Naive thymus-derived CD4-positive, alpha-beta T cell (primary cell): ENCODE measurements at regions of chr15 and their contacts with region 1.

Region 1: DNA sequence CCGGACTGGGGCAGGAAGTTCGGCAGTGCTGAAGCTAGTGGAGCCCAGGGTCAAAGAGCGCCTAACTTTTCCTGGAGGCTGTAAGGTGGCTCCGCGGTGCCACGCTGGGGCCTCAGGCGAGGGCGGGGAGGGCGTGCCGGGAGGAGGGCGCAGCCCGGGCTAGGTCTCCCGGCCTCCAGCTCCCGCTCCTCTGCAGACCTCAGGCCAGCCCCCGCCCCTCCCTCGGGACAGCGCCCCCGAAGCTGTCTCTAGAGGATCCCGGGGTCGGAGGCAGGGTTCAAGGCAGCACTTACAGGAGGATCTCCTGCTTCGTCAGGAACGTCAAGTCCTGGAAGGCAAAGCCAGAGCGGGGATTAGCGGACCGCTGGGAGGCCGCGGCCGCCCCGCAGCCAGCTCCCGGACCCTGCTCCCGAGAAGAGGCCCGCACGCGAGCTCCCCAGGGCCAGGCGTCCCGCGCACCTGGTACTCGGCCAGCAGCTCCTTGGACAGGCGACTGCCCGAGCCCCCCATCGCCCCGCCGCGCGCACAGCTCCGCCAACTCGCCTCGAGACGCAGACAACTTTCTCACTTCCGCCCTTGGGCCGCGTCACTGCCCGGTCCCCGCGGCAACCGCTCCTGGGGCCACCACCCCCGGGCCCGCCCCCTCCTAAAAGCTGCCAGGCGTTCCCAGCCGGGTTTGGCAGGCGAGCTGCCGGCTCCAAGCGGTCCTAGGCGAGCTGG is at the start of gene CIB1:
- DNase-seq: peak in 7 of 9 donors; percentile 91 to 97 (median 95)
- ATAC-seq: peak; percentile 89
- H3K4me3 ChIP-seq: peak within 1 kb of the TSS; percentile 92
- H3K4me3 Mint-ChIP-seq: peak within 1 kb of the TSS; percentile 87 to 95 (median 92)
- H3K27ac ChIP-seq: peak within 1 kb of the TSS; percentile 99
- H3K27ac Mint-ChIP-seq: peak within 1 kb of the TSS; percentile 96 to 100 (median 98)
- H3K4me1 ChIP-seq: peaks cover 39 to 43% of the 10 kb centered on the region in 2 donors
- H3K4me1 Mint-ChIP-seq: peaks cover 40 to 67% (median 57%) of the 10 kb centered on the region in 7 donors
- H3K27me3 ChIP-seq: no peaks in the 10 kb centered on the region
- H3K27me3 Mint-ChIP-seq: no peaks in the 10 kb centered on the region
- total RNA-seq, gene CIB1: 76.8 to 149 (median 127) TPM

Region 2: DNA sequence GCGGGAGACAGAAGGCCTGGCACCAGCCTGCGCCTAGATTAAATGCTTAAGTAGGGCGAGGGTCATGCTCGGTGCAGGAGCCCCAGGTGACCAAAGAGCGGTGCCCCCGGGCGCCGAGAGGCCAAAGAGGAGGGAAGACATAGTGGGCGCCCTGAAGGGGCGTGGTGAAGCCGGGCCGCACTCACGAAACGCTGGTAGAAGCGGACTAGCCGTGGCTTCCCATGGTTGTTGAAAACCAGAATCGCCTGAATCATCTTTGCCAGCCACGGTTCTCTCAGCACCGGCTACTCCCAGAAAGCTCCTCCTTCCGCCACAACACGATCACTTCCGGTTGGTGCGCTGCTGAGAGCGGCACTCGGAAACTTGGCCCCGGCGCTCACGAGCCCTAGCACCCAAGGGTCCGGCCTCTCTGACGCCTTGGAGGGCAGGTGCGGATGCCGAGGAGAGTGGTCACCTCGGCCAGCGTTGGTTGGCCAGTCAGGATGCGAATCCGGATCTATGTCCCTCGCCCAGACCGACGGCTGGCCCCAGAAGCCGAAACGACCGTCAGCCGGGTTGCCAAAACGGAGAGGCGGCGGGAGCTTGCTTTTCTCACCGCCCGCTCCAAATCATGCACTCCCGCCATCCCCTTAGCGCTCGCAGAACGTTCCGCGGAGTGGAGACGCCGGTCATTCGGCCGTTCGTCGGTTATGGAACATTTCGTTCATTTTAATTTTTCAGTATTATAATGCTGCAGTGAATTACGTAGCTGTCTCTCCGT is 339.7 kb before region 1 on chr15 and contains the start of gene AP3S2:
- CTCF ChIA-PET with region 1: no interaction called
- POLR2A ChIA-PET with region 1: no interaction called
- intact Hi-C with region 1: loop called (anchors 5 kb)
- DNase-seq: peak; percentile 79 to 90 (median 86)
- ATAC-seq: peak; percentile 97
- H3K4me3 ChIP-seq: peak within 1 kb of the TSS; percentile 88
- H3K4me3 Mint-ChIP-seq: peak within 1 kb of the TSS; percentile 89 to 99 (median 96)
- H3K27ac ChIP-seq: peak within 1 kb of the TSS; percentile 81
- H3K27ac Mint-ChIP-seq: peak within 1 kb of the TSS; percentile 91 to 98 (median 95)
- H3K4me1 ChIP-seq: peaks cover 6 to 14% of the 10 kb centered on the region in 2 donors
- H3K4me1 Mint-ChIP-seq: peaks cover 17 to 46% (median 36%) of the 10 kb centered on the region in 7 donors
- H3K27me3 ChIP-seq: no peaks in the 10 kb centered on the region
- H3K27me3 Mint-ChIP-seq: no peaks in the 10 kb centered on the region
- total RNA-seq, gene AP3S2: 24.3 to 31.7 (median 28.4) TPM

Region 3: DNA sequence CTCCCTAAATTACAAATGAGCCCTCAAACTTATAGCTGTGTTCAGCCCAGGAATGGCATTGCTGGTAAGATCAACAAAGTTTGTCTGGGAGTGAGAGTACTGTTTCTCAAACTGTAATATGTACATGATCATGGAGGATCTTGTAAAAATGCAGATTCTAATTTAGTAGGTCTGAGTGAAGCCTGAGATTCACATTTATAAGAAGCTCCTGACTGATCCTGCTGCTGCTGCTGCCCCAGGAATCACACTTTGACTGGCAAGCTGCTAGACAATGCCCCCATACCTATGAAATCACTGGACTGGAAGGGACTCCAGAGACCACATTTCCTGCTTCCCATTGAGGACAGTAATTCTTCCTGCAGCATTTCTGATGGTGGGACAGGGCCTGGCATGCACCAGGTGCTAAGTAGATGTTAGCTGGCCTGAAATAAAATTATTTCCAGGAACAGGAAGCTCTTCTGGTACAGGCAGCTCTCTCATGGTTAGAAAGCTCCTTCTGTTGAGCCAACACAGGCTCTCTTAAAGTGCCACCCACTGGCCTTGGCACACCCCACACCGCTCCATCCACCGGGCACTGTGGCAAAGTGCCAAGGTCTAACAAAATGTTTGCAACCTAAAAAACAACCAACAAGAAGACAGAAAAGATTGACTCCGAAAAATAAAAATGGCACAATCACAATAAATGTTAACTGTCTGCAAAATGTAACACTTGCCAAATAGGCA is 269.1 kb before region 1 on chr15:
- CTCF ChIA-PET with region 1: no interaction called
- POLR2A ChIA-PET with region 1: no interaction called
- intact Hi-C with region 1: no loop called
- DNase-seq: no peak
- ATAC-seq: no peak
- H3K4me3 ChIP-seq: no peak overlapping the region
- H3K4me3 Mint-ChIP-seq: no peak overlapping the region
- H3K27ac ChIP-seq: no peak overlapping the region
- H3K27ac Mint-ChIP-seq: no peak overlapping the region
- H3K4me1 ChIP-seq: no peaks in the 10 kb centered on the region
- H3K4me1 Mint-ChIP-seq: peaks cover 0 to 11% (median 6%) of the 10 kb centered on the region in 7 donors
- H3K27me3 ChIP-seq: no peaks in the 10 kb centered on the region
- H3K27me3 Mint-ChIP-seq: peaks cover 0 to 20% (median 0%) of the 10 kb centered on the region in 5 donors

Region 4: GRCh38 chr15:90184786-90185569 is 48.6 kb before region 1 on chr15:
- CTCF ChIA-PET with region 1: no interaction called
- POLR2A ChIA-PET with region 1: interaction called, 32 read pairs
- intact Hi-C with region 1: loop called (anchors 1 kb)
- DNase-seq: peak; percentile 42 to 63 (median 60)
- ATAC-seq: peak; percentile 85
- H3K4me3 ChIP-seq: peak overlapping the region; percentile 56
- H3K4me3 Mint-ChIP-seq: peak overlapping the region; percentile 74 to 94 (median 83)
- H3K27ac ChIP-seq: peak overlapping the region; percentile 48
- H3K27ac Mint-ChIP-seq: peak overlapping the region in 8 of 9 donors; percentile 5 to 89 (median 50)
- H3K4me1 ChIP-seq: peaks cover 6% of the 10 kb centered on the region in 2 donors
- H3K4me1 Mint-ChIP-seq: peaks cover 6 to 30% (median 14%) of the 10 kb centered on the region in 7 donors
- H3K27me3 ChIP-seq: no peaks in the 10 kb centered on the region
- H3K27me3 Mint-ChIP-seq: peaks cover 0 to 8% (median 0%) of the 10 kb centered on the region in 5 donors

Region 5: GRCh38 chr15:90221246-90221900 is 12.2 kb before region 1 on chr15:
- CTCF ChIA-PET with region 1: interaction called, 6 read pairs
- POLR2A ChIA-PET with region 1: interaction called, 10 read pairs
- intact Hi-C with region 1: loop called in 1 of 2 experiments (anchors 1 kb)
- DNase-seq: no peak
- ATAC-seq: peak; percentile 37
- H3K4me3 ChIP-seq: no peak overlapping the region
- H3K4me3 Mint-ChIP-seq: no peak overlapping the region
- H3K27ac ChIP-seq: no peak overlapping the region
- H3K27ac Mint-ChIP-seq: no peak overlapping the region
- H3K4me1 ChIP-seq: no peaks in the 10 kb centered on the region
- H3K4me1 Mint-ChIP-seq: peaks cover 7 to 19% (median 10%) of the 10 kb centered on the region in 7 donors
- H3K27me3 ChIP-seq: no peaks in the 10 kb centered on the region
- H3K27me3 Mint-ChIP-seq: no peaks in the 10 kb centered on the region

Region 6: DNA sequence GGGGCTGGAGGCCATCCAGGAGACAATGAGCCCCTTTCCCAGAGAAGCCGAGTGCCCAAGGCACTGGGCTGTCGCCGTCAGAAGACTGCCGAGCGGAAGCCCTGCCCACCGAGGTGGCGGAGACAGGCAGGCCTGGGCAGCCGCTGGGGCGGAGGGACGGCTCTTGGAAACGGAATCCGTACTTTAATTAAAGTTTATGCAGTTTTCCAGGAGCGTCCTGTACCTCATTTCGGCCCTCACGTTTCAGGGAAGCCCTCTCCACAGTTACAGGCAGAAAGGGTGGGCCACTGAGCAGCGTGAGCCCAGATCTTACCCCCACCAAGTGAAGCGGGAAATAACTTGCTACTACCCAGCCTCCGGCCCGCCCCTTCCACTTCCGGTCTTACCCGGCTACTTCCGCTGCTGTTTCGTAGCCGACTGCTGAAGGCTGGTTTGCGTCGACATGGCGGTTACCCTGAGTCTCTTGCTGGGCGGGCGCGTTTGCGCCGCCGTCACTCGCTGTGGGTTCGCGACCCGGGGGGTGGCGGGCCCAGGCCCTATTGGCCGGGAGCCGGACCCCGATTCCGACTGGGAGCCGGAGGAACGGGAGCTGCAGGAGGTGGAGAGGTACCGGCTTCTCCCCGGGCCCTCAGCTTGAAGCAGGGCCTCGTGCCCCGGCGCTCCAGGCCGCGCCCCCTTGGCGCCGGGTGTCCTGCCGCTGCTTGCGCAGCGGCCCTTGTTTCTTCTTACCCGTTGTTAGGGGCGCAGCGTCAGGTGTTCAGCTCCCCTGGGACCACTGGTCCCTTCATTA is 31.9 kb after region 1 on chr15 and contains the start of gene NGRN:
- CTCF ChIA-PET with region 1: no interaction called
- POLR2A ChIA-PET with region 1: interaction called, 61 read pairs
- intact Hi-C with region 1: loop called (anchors 1 kb)
- DNase-seq: peak; percentile 81 to 96 (median 93)
- ATAC-seq: peak; percentile 94
- H3K4me3 ChIP-seq: peak within 1 kb of the TSS; percentile 84
- H3K4me3 Mint-ChIP-seq: peak within 1 kb of the TSS; percentile 95 to 99 (median 97)
- H3K27ac ChIP-seq: peak within 1 kb of the TSS; percentile 96
- H3K27ac Mint-ChIP-seq: peak within 1 kb of the TSS; percentile 98 to 100 (median 99)
- H3K4me1 ChIP-seq: peaks cover 36 to 40% of the 10 kb centered on the region in 2 donors
- H3K4me1 Mint-ChIP-seq: peaks cover 22 to 60% (median 48%) of the 10 kb centered on the region in 7 donors
- H3K27me3 ChIP-seq: no peaks in the 10 kb centered on the region
- H3K27me3 Mint-ChIP-seq: no peaks in the 10 kb centered on the region
- total RNA-seq, gene NGRN: 34.1 to 51.5 (median 48.4) TPM

Region 7: GRCh38 chr15:90400406-90401314 is 167.1 kb after region 1 on chr15:
- CTCF ChIA-PET with region 1: interaction called, 3 read pairs
- POLR2A ChIA-PET with region 1: no interaction called
- intact Hi-C with region 1: loop called (anchors 5 kb)
- DNase-seq: peak in 8 of 9 donors; percentile 49 to 89 (median 82)
- ATAC-seq: peak; percentile 98
- H3K4me3 ChIP-seq: peak overlapping the region; percentile 37
- H3K4me3 Mint-ChIP-seq: peak overlapping the region; percentile 61 to 86 (median 80)
- H3K27ac ChIP-seq: peak overlapping the region; percentile 83
- H3K27ac Mint-ChIP-seq: peak overlapping the region; percentile 94 to 99 (median 99)
- H3K4me1 ChIP-seq: peaks cover 30 to 36% of the 10 kb centered on the region in 2 donors
- H3K4me1 Mint-ChIP-seq: peaks cover 38 to 71% (median 64%) of the 10 kb centered on the region in 7 donors
- H3K27me3 ChIP-seq: no peaks in the 10 kb centered on the region
- H3K27me3 Mint-ChIP-seq: no peaks in the 10 kb centered on the region